B cell (primary cell): ENCODE measurements at regions of chr18 and their contacts with region 1.

Region 1: GRCh38 chr18:9575558-9575957 is 38.8 kb downstream of the PPP4R1 start:
- DNase-seq: peak; percentile 56
- ATAC-seq: peak; percentile 33
- H3K4me3 ChIP-seq: no peak overlapping the region
- H3K4me3 Mint-ChIP-seq: no peak overlapping the region
- H3K27ac ChIP-seq: no peak overlapping the region
- H3K27ac Mint-ChIP-seq: no peak overlapping the region
- H3K4me1 ChIP-seq: no peaks in the 10 kb centered on the region
- H3K4me1 Mint-ChIP-seq: no peaks in the 10 kb centered on the region
- H3K27me3 ChIP-seq: no peaks in the 10 kb centered on the region
- H3K27me3 Mint-ChIP-seq: no peaks in the 10 kb centered on the region
- CTCF ChIP-seq: peak; percentile 66

Region 2: DNA sequence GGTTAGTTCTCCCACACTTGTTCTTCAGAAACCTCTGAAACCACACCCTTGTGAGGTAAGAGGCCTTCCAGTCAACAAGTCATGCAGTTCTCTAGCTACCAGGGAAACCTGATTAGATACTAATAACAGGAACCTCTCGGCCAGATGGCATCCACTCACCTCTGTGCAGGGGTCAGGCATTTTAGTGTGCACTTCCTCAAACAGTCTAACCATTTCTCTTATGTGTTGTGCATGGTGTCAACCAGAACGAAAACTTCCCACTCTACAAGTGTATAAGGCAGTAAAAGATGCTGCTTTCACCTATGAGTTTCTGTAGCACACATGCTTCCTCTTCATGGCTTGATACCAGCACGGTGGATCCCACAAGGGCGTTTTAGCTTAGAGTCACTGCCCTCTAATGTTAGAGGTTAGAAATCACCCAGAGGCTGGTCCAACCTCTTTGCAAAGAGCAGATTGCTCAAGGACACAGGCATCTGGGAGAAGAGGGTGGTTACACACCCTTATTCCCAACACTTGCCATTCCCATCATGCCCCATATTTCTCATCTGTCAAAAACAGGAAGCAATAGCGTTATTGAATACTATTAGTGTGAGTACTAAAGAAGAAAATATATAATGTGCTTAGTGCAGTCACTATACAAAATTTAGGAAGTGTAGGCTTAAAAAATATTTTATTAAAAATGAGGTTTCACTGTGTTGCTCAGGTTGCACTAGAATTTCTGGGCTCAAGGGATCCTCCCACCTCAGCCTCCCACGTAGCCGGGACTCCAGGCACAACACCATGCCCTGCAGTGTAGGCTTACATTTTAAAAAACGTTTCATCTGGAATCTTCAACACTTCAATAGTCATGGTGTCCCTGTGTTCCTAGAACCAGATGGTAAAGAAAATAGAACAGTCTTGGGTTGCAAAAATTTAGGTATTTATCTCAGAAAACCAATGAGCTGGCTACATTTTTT is 98.0 kb after region 1 on chr18:
- CTCF ChIA-PET with region 1: interaction called, 9 read pairs
- POLR2A ChIA-PET with region 1: no interaction called
- intact Hi-C with region 1: loop called (anchors 1 kb)
- DNase-seq: peak; percentile 95
- ATAC-seq: peak; percentile 95
- H3K4me3 ChIP-seq: no peak overlapping the region
- H3K4me3 Mint-ChIP-seq: peak overlapping the region; percentile 40
- H3K27ac ChIP-seq: peak overlapping the region; percentile 65 to 78
- H3K27ac Mint-ChIP-seq: peak overlapping the region; percentile 90
- H3K4me1 ChIP-seq: peaks cover 12 to 15% of the 10 kb centered on the region in 2 donors
- H3K4me1 Mint-ChIP-seq: peaks cover 10% of the 10 kb centered on the region
- H3K27me3 ChIP-seq: no peaks in the 10 kb centered on the region
- H3K27me3 Mint-ChIP-seq: no peaks in the 10 kb centered on the region
- CTCF ChIP-seq: peak; percentile 65

Region 3: DNA sequence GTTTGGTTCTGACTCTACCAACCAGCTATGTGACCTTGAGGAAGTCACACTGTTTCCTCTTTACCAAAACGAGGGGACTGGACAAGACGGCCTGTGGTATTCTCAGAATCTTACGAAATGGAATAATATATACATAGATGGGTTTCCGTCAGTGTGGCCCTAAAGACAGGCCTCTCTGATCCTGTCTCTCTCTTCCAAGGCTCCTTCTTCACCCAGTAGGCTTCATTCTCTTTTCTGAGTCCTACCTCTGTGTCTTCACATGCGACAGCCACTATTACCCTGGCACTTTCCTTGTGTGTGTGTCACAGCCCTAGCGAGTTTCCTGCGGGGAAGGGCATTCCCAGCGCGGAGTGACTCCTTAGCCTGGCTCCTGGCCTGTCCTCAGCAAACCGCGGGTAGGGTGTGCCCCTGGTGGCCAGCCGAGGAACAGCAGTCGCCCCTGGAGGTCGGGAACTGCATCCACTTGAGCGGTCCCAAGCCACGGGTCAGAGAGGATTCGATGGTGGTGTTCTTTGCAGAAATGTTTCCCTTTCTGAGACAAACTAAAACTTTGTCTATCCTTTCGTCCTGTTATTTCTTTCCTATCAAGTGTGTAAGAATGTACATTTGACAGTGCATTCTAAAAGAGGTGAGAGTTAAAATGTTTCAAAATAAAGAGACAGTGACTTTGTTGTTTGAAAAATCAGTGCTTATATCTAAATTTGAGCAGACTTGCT is 195.9 kb after region 1 on chr18:
- CTCF ChIA-PET with region 1: interaction called, 3 read pairs
- POLR2A ChIA-PET with region 1: no interaction called
- intact Hi-C with region 1: loop called (anchors 1 kb)
- DNase-seq: peak; percentile 72
- ATAC-seq: peak; percentile 92
- H3K4me3 ChIP-seq: no peak overlapping the region
- H3K4me3 Mint-ChIP-seq: peak overlapping the region; percentile 47
- H3K27ac ChIP-seq: no peak overlapping the region
- H3K27ac Mint-ChIP-seq: no peak overlapping the region
- H3K4me1 ChIP-seq: peaks cover 0 to 13% of the 10 kb centered on the region in 2 donors
- H3K4me1 Mint-ChIP-seq: peaks cover 26% of the 10 kb centered on the region
- H3K27me3 ChIP-seq: no peaks in the 10 kb centered on the region
- H3K27me3 Mint-ChIP-seq: no peaks in the 10 kb centered on the region
- CTCF ChIP-seq: peak; percentile 98

Region 4: DNA sequence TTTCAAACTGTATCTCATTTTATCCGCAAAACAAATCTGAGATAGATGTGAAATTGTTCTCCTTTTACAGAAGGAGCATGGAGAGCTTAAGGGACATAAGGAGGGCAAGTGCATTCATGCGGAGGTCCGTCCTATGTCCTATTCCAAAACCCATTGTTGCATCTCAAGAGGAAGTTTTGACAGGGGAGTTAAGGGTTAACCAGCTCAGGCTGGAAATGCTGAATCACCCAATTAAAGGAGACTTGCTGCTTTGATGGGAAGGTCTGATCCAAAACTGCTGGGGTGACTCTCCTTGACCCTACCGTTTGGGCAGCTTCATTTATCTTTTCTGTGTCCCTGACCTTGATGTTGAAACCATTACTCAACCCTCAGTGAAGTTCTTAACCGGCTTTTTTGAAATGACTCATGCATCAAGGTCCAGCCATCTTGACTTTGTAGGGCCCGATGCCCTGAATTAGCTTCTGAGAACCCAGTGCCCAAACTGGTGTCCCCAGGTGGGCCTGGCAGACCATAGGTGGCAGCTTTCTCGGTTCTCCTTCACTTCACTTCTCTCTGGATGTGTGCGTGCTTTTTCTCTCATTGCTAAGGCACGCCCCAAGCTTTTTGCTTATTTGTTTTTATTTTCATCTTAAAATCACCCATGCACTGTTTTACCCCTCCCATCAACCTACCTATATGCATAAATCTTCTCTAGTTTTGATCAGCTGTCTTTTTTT is 294.3 kb after region 1 on chr18:
- CTCF ChIA-PET with region 1: no interaction called
- POLR2A ChIA-PET with region 1: no interaction called
- intact Hi-C with region 1: no loop called
- DNase-seq: no peak
- ATAC-seq: no peak
- H3K4me3 ChIP-seq: no peak overlapping the region
- H3K4me3 Mint-ChIP-seq: no peak overlapping the region
- H3K27ac ChIP-seq: no peak overlapping the region
- H3K27ac Mint-ChIP-seq: no peak overlapping the region
- H3K4me1 ChIP-seq: no peaks in the 10 kb centered on the region
- H3K4me1 Mint-ChIP-seq: peaks cover 1% of the 10 kb centered on the region
- H3K27me3 ChIP-seq: peaks cover 0 to 4% (median 0%) of the 10 kb centered on the region in 4 experiments
- H3K27me3 Mint-ChIP-seq: peaks cover 18% of the 10 kb centered on the region
- CTCF ChIP-seq: no peak